ENCODE measurements at regions of chr9 and their contacts with region 1.

Region 1: DNA sequence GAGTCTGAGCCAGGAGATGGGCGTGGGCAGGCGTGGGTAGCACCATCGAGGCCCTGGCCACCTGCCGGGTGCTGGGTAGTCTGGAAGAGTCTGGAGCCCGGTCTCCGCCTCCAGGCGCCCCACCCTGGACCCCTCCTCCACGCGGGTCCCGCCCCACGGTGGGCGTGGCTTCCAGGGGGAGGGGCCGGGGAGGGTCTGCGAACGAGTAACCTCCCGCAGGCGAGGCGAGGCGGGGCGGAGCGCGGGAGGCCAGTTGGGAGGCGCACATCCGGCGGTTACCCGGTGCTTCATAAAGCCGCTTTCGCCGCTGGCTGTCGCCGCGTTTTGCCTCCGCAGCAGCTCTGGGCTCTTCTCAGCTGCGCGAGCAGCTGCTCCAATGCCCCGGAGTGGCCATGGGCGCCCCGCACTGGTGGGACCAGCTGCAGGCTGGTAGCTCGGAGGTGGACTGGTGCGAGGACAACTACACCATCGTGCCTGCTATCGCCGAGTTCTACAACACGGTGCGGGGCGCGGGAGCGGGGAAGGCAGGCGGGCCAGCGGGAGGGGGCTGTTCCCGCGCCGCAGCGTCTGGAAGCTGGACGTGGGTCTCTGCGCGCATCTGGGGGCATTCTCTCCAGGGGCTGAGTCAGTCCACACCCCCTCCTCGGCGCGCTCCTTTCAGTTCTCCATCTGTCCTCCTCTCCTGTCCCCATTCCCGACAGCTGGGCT is at the start of gene ACER2:
- DNase-seq: peak; percentile 85 to 99 (median 93)
- ATAC-seq: peak; percentile 97
- H3K4me3 ChIP-seq: peak within 1 kb of the TSS; percentile 86 to 97
- H3K4me3 Mint-ChIP-seq: peak within 1 kb of the TSS; percentile 93
- H3K27ac ChIP-seq: peak within 1 kb of the TSS; percentile 44 to 46
- H3K27ac Mint-ChIP-seq: peak within 1 kb of the TSS; percentile 69
- H3K4me1 ChIP-seq: peaks cover 14% of the 10 kb centered on the region
- H3K4me1 Mint-ChIP-seq: peaks cover 16% of the 10 kb centered on the region
- H3K27me3 ChIP-seq: no peaks in the 10 kb centered on the region
- H3K27me3 Mint-ChIP-seq: no peaks in the 10 kb centered on the region
- CTCF ChIP-seq: no peak
- total RNA-seq, gene ACER2: 0.62 to 1.2 TPM

Region 2: DNA sequence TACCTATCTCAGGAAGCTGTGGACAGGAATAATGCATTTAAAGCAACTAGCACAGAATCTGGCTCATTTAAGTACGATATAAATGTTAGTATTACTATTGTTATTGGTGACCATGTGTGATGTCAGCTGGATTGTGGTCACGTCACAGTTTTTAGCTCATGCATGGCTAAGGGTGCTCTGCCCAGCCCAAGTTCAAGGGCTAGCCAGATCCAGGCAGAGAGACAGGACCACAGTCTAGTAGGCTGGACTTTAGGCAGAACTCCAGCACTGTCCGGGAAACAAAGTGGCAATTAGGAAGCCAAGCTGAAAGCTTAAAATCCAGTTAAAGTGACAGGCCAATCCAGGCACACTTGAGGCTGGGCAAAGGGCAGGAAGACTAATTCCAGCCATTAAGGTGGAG is 661.3 kb before region 1 on chr9:
- CTCF ChIA-PET with region 1: no interaction called
- POLR2A ChIA-PET with region 1: no interaction called
- intact Hi-C with region 1: no loop called
- DNase-seq: no peak
- ATAC-seq: no peak
- H3K4me3 ChIP-seq: no peak overlapping the region
- H3K4me3 Mint-ChIP-seq: no peak overlapping the region
- H3K27ac ChIP-seq: no peak overlapping the region
- H3K27ac Mint-ChIP-seq: no peak overlapping the region
- H3K4me1 ChIP-seq: no peaks in the 10 kb centered on the region
- H3K4me1 Mint-ChIP-seq: no peaks in the 10 kb centered on the region
- H3K27me3 ChIP-seq: no peaks in the 10 kb centered on the region
- H3K27me3 Mint-ChIP-seq: peaks cover 3% of the 10 kb centered on the region
- CTCF ChIP-seq: no peak

Region 3: DNA sequence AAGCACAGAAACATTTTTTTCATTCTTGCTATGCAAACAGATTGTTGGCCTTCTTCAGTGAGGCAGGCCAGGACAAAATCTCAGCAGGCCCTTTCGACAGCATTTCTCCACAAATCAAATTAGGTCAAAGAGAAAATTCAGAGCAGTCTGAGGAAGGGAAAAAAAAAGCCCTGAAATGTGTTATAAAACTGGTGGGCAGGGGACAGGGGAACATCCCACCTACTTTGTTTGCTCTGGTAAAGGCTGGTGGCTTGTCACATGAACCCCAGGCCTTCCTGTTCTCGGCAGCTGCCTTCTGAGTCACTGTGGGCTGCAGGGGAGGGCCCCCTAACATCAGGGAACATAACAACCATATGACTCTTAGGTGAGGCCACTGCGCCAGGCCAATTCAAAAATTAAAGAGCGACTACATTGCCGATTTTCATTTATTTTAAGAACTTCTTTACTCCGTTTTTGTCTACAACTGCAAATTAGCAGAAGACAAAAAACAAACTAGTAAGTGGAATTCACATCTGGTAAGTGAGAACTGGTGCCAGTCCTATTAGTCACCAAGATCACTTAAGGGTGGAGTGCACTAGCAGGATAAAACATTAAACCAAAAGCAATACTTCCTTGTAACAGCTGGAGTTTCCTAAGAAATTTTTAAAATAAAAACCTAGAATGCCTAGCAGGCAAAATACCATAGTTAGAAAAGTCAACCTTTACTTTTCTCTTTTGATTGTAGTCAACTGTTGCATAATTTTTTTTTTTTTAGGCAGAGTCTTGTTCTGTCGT is 224.5 kb before region 1 on chr9:
- CTCF ChIA-PET with region 1: no interaction called
- POLR2A ChIA-PET with region 1: no interaction called
- intact Hi-C with region 1: loop called in 1 of 2 experiments (anchors 1 kb)
- DNase-seq: peak; percentile 49 to 94 (median 82)
- ATAC-seq: peak; percentile 99
- H3K4me3 ChIP-seq: peak overlapping the region in 1 of 2 experiments; percentile 3
- H3K4me3 Mint-ChIP-seq: peak overlapping the region; percentile 71
- H3K27ac ChIP-seq: peak overlapping the region; percentile 55 to 87
- H3K27ac Mint-ChIP-seq: peak overlapping the region; percentile 96
- H3K4me1 ChIP-seq: peaks cover 34% of the 10 kb centered on the region
- H3K4me1 Mint-ChIP-seq: peaks cover 25% of the 10 kb centered on the region
- H3K27me3 ChIP-seq: no peaks in the 10 kb centered on the region
- H3K27me3 Mint-ChIP-seq: no peaks in the 10 kb centered on the region
- CTCF ChIP-seq: no peak

Region 4: DNA sequence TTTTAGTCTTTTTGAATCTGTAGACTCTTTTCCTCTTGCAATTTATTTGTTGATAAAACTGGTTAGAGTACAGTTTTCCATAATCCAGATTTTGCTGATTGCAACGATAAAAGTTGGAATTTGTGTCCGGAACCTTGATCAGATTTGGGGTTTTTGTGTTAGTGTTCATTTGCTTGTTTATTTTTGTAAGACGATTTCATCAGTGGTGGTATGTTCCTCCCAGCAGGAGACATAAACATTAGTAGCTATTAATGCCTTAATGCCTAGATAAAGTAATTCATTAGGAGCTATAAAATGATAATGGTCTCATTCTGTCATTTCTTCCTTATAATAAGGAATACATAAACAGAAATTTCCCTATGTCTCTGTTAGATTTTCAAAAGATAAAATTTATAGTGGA is 50.1 kb before region 1 on chr9:
- CTCF ChIA-PET with region 1: no interaction called
- POLR2A ChIA-PET with region 1: no interaction called
- intact Hi-C with region 1: no loop called
- DNase-seq: no peak
- ATAC-seq: no peak
- H3K4me3 ChIP-seq: no peak overlapping the region
- H3K4me3 Mint-ChIP-seq: no peak overlapping the region
- H3K27ac ChIP-seq: no peak overlapping the region
- H3K27ac Mint-ChIP-seq: no peak overlapping the region
- H3K4me1 ChIP-seq: no peaks in the 10 kb centered on the region
- H3K4me1 Mint-ChIP-seq: no peaks in the 10 kb centered on the region
- H3K27me3 ChIP-seq: no peaks in the 10 kb centered on the region
- H3K27me3 Mint-ChIP-seq: no peaks in the 10 kb centered on the region
- CTCF ChIP-seq: no peak

Region 5: DNA sequence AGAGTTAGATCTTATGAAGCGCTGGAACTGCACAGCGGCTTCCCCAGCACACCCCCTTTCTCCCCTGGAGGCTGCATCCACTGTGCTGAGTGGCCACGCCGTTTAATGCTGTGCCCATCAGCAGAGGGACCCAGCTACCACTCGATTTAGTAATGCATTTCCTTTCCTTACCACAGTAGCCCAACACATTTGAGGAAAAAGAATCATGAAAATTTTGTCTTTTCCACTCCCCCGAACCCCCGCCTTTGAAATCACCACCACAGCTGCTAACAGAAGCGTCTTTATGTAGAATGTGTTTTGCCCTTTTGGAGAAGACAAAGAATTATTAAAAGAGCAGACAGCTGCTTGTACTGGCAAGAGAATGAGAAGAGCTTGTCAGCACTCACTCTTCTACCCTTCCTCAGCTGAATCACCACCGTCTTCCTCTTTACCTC is 73.1 kb after region 1 on chr9:
- CTCF ChIA-PET with region 1: no interaction called
- POLR2A ChIA-PET with region 1: no interaction called
- intact Hi-C with region 1: no loop called
- DNase-seq: no peak
- ATAC-seq: no peak
- H3K4me3 ChIP-seq: no peak overlapping the region
- H3K4me3 Mint-ChIP-seq: no peak overlapping the region
- H3K27ac ChIP-seq: no peak overlapping the region
- H3K27ac Mint-ChIP-seq: no peak overlapping the region
- H3K4me1 ChIP-seq: no peaks in the 10 kb centered on the region
- H3K4me1 Mint-ChIP-seq: no peaks in the 10 kb centered on the region
- H3K27me3 ChIP-seq: no peaks in the 10 kb centered on the region
- H3K27me3 Mint-ChIP-seq: peaks cover 10% of the 10 kb centered on the region
- CTCF ChIP-seq: no peak

Measured in CD8-positive, alpha-beta T cell (primary cell).